Natural killer cell (primary cell): ENCODE measurements at regions of chr11 and their contacts with region 1.

Region 1: GRCh38 chr11:67252831-67253239 is 13.4 kb upstream of the GRK2 start:
- DNase-seq: peak in 1 of 2 donors; percentile 70
- ATAC-seq: peak; percentile 78 to 86 (median 79)
- H3K4me3 ChIP-seq: no peak overlapping the region
- H3K4me3 Mint-ChIP-seq: peak overlapping the region; percentile 57
- H3K27ac ChIP-seq: peak overlapping the region; percentile 7
- H3K27ac Mint-ChIP-seq: peak overlapping the region; percentile 78 to 89
- H3K4me1 ChIP-seq: peaks cover 18% of the 10 kb centered on the region
- H3K4me1 Mint-ChIP-seq: peaks cover 36 to 41% of the 10 kb centered on the region in 2 donors
- H3K27me3 ChIP-seq: no peaks in the 10 kb centered on the region
- H3K27me3 Mint-ChIP-seq: no peaks in the 10 kb centered on the region
- CTCF ChIP-seq: peak; percentile 53

Region 2: DNA sequence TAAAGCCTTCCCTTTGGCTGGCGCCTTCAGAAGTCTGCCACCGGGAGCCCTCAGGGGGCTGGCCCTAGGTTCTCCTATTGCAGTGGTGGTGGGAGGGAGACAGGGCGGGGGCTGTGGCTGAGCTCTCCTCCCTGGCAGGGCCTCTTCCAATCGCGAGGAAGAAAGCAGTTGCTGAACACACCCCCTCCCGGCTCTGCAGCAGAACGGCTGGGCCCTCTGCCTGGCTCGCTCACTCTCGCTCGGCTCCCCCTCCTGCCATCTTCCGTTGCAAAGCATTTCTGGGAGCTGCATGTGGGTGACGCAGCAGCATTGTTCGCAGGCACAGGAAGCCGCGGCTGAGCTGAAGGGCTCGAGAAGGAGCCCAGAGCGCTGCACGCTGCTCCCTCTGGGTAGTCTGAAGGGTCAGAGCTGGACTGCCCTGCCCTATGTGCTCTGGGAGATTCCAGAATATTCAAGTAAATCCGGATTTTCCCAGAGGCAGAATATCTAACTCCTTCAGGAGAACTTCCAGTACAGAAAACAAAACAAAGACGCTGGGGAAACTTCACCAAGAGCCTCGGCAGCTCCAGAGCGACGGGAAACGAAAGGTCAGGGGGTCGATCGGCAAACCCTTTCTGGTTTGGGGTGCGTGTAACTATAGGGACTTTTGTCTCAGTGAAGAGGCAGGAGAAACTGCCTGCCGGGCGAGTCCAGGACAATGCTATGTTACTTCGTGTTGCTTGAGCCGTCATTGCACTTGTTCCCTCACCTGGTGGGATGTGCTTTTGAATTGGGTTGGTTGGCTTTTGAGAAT is 12.9 kb before region 1 on chr11:
- intact Hi-C with region 1: loop called (anchors 1 kb)
- DNase-seq: peak; percentile 88 to 98
- ATAC-seq: peak; percentile 84 to 96 (median 88)
- H3K4me3 ChIP-seq: peak overlapping the region; percentile 79
- H3K4me3 Mint-ChIP-seq: peak overlapping the region; percentile 98
- H3K27ac ChIP-seq: peak overlapping the region; percentile 95
- H3K27ac Mint-ChIP-seq: peak overlapping the region; percentile 100
- H3K4me1 ChIP-seq: peaks cover 35% of the 10 kb centered on the region
- H3K4me1 Mint-ChIP-seq: peaks cover 55 to 58% of the 10 kb centered on the region in 2 donors
- H3K27me3 ChIP-seq: no peaks in the 10 kb centered on the region
- H3K27me3 Mint-ChIP-seq: no peaks in the 10 kb centered on the region
- CTCF ChIP-seq: no peak